ENCODE measurements at regions of chr6 and their contacts with region 1.

Region 1: GRCh38 chr6:36442671-36443470 is at the starts of genes KCTD20 and PXT1:
- DNase-seq: peak; percentile 83 to 97 (median 86)

Region 2: GRCh38 chr6:36196880-36197548 is 245.9 kb before region 1 on chr6:
- intact Hi-C with region 1: loop called (anchors 5 kb)
- DNase-seq: peak; percentile 98 to 100 (median 100)

Region 3: GRCh38 chr6:36364964-36365479 is 77.8 kb before region 1 on chr6:
- intact Hi-C with region 1: no loop called
- DNase-seq: no peak

Region 4: DNA sequence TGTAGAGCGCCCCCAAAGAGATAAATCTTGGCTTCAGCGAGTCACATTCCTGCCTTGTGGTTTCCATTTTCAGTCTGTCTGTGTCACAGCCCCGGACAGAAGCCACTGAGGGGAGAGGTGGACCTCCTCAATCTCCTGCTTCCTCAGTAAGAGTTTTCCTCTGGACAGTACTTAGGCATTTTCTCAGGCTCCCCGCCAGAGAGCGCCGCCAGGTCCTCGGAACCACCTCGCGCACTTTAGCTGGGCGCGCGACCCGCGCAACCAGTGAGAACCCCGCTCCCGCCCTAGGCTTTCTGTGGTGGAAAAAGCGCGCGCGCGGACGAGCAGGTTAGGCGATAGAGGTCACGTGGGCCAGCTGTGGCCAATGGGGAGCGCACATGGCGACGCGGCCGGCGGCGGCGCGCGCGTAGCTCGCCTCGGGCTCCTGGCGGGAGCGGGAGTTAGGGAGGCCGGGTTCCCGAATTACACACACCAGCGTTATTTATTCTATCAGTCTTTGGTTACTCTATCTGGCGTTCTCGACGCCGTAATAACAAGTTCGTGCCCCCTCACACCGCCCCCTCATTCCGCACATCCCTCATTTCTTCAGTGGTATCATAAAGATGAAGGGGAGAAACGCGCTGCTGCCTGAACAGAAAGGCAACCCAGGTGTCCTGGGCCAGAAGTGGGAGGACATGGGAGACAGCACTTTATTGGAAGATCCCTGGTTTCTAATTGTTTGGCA is 19.6 kb before region 1 on chr6:
- intact Hi-C with region 1: loop called (anchors 1 kb)
- DNase-seq: peak; percentile 94 to 99 (median 98)

Region 5: GRCh38 chr6:36546920-36547645 is 104.2 kb after region 1 on chr6 and contains the start of gene STK38:
- intact Hi-C with region 1: loop called (anchors 5 kb)
- DNase-seq: peak; percentile 80 to 97 (median 88)

Region 6: GRCh38 chr6:36594029-36594815 is 151.4 kb after region 1 on chr6 and contains the start of gene SRSF3:
- intact Hi-C with region 1: loop called (anchors 5 kb)
- DNase-seq: peak; percentile 95 to 100 (median 96)